GM12878 (cell line): ENCODE measurements at regions of chr4 and their contacts with region 1.

Region 1: GRCh38 chr4:139651282-139652194 is 14.1 kb upstream of the MGST2 start:
- DNase-seq: no peak
- ATAC-seq: peak; percentile 89
- H3K4me3 ChIP-seq: no peak overlapping the region
- H3K27ac ChIP-seq: no peak overlapping the region
- H3K4me1 ChIP-seq: no peaks in the 10 kb centered on the region
- H3K27me3 ChIP-seq: 0 out of 4 replicates have a peak, but pooled peaks cover 0 to 3% of the 10 kb centered on the region in 2 experiments
- CTCF ChIP-seq: peak; percentile 89 to 92 (median 89)
- EP300 ChIP-seq: no peak
- POLR2A ChIP-seq: no peak
- RAD21 ChIP-seq: peak; percentile 74

Region 2: GRCh38 chr4:139416073-139416673 is 235.4 kb before region 1 on chr4:
- CTCF ChIA-PET with region 1: no interaction called
- POLR2A ChIA-PET with region 1: no interaction called
- RAD21 ChIA-PET with region 1: no interaction called
- SMC1A ChIA-PET with region 1: no interaction called
- in situ Hi-C with region 1: no loop called
- intact Hi-C with region 1: loop called (anchors 1 kb)
- DNase-seq: no peak
- ATAC-seq: peak; percentile 68
- H3K4me3 ChIP-seq: no peak overlapping the region
- H3K27ac ChIP-seq: no peak overlapping the region
- H3K4me1 ChIP-seq: no peaks in the 10 kb centered on the region
- H3K27me3 ChIP-seq: no peaks in the 10 kb centered on the region
- CTCF ChIP-seq: peak; percentile 44 to 54 (median 53); a peak in 5 of 6 replicates
- EP300 ChIP-seq: no peak
- POLR2A ChIP-seq: no peak
- RAD21 ChIP-seq: peak; percentile 57

Region 3: DNA sequence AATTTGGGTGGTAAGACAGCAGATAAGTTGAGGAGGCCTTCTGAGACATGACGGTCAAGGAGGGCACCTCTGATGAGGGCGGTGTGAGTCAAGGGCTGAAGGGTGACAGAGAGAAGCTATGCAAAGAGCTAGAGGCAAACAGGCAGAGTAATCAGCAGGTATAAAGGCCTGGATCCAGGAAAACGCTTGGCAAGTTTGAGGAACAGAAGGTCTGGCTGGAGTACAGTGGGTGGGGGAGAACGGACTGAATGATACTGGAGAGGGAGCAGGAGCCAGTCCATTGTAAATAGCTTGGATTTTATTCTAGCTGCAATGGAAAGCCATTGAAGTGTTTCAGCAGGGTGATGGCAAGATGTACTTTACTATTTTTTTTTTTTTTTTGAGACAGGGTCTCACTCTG is 158.4 kb before region 1 on chr4:
- CTCF ChIA-PET with region 1: interaction called, 5 read pairs
- POLR2A ChIA-PET with region 1: no interaction called
- RAD21 ChIA-PET with region 1: no interaction called
- SMC1A ChIA-PET with region 1: no interaction called
- in situ Hi-C with region 1: no loop called
- intact Hi-C with region 1: loop called (anchors 10 kb)
- DNase-seq: no peak
- ATAC-seq: no peak
- H3K4me3 ChIP-seq: no peak overlapping the region
- H3K27ac ChIP-seq: no peak overlapping the region
- H3K4me1 ChIP-seq: no peaks in the 10 kb centered on the region
- H3K27me3 ChIP-seq: no peaks in the 10 kb centered on the region
- CTCF ChIP-seq: no peak
- EP300 ChIP-seq: no peak
- POLR2A ChIP-seq: no peak
- RAD21 ChIP-seq: no peak

Region 4: DNA sequence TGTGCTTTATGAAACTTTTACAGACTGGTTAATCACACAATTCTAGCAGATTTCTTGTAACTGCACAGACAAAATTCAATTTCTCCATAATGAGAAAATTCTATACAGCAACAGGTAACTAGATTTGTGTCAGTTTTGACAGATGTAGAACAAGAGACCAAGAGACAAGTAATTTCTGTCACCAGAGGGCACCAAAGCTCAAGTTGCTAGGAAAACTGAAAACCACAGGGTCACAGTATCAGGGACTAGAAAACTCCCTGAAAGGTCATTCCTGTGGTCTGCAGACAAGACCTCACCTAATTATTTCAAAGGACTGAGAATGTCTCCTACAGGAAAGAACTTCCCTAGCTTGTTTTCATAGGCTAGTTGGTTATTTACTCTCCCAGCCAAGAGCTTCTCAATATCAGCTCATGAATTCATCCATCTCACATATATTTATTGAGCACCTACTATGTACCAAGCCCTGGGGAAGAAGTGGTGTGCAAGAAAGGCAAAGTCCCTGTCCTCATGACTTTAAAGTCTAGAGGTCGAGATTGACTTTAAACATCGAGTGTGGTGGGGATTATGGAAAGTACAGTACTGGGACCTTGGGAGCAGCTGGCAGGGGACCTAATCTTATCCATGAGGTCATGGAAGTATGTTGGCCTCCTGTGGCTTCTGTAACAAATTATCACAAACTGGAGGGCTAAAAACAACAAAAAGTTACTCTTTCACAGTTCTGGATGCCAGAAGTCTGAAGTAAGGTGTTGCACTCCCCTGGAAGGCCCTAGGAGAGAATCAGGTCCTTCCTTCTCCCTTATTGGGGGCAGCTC is 47.8 kb before region 1 on chr4:
- CTCF ChIA-PET with region 1: interaction called, 57 read pairs
- POLR2A ChIA-PET with region 1: no interaction called
- RAD21 ChIA-PET with region 1: interaction called, 3 read pairs
- SMC1A ChIA-PET with region 1: interaction called, 22 read pairs
- in situ Hi-C with region 1: no loop called
- intact Hi-C with region 1: loop called (anchors 1 kb)
- DNase-seq: peak; percentile 8
- ATAC-seq: peak; percentile 72
- H3K4me3 ChIP-seq: no peak overlapping the region
- H3K27ac ChIP-seq: no peak overlapping the region
- H3K4me1 ChIP-seq: no peaks in the 10 kb centered on the region
- H3K27me3 ChIP-seq: peaks cover 0 to 2% of the 10 kb centered on the region in 2 experiments; a peak in 1 of 4 replicates
- CTCF ChIP-seq: peak; percentile 46 to 61 (median 57)
- EP300 ChIP-seq: no peak
- POLR2A ChIP-seq: no peak
- RAD21 ChIP-seq: peak; percentile 75

Region 5: DNA sequence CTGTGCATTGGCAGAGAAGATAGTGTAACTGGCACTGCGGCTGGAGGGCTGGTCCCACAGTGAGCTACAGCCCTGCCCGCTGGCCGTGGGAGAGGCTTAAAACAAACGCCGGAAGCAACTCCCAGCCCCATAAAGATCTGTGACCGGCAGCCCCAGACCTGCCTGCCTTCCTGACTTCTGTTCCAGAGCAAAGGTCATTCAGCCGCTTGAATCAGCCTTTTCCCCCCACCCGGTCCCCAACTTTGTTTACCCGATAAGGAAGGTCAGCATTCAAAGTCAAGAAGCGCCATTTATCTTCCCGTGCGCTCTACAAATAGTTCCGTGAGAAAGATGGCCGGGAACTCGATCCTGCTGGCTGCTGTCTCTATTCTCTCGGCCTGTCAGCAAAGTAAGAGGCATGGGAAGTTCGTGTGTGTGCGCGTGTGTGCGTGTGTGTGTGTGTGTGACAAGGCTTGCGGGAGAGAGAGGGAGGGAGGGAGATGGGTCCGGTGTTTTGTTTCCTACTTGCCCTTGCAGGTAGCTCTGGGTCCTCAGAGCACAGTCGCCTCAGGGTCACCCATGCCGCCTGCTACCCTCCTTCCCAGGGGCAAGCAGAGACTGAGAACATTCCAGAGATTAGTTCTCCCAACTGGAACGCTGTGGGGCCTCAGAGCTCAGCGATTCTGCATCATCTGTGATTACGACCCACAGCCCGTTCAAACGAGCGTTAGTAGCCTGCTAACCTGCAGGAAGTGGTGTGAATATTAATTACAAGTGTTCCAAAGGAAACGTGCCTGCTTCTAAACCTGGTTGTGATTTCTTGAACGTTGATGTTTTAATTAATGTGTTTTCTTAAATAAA is 14.4 kb after region 1 on chr4 and contains the start of gene MGST2:
- CTCF ChIA-PET with region 1: interaction called, 30 read pairs
- POLR2A ChIA-PET with region 1: no interaction called
- RAD21 ChIA-PET with region 1: interaction called, 4 read pairs
- SMC1A ChIA-PET with region 1: interaction called, 3 read pairs
- in situ Hi-C with region 1: no loop called
- intact Hi-C with region 1: no loop called
- DNase-seq: no peak
- ATAC-seq: peak; percentile 94
- H3K4me3 ChIP-seq: peak within 1 kb of the TSS; percentile 69
- H3K27ac ChIP-seq: peak within 1 kb of the TSS; percentile 81
- H3K4me1 ChIP-seq: no peaks in the 10 kb centered on the region; the same call in 1 of the 2 replicates
- H3K27me3 ChIP-seq: no peaks in the 10 kb centered on the region
- CTCF ChIP-seq: no peak
- EP300 ChIP-seq: no peak
- POLR2A ChIP-seq: peak; percentile 71
- RAD21 ChIP-seq: no peak
- polyA plus RNA-seq, gene MGST2: 36.0 to 50.1 TPM

Region 6: GRCh38 chr4:139734875-139735380 is 83.4 kb after region 1 on chr4:
- CTCF ChIA-PET with region 1: no interaction called
- POLR2A ChIA-PET with region 1: no interaction called
- RAD21 ChIA-PET with region 1: no interaction called
- SMC1A ChIA-PET with region 1: no interaction called
- in situ Hi-C with region 1: no loop called
- intact Hi-C with region 1: no loop called
- DNase-seq: no peak
- ATAC-seq: peak; percentile 84
- H3K4me3 ChIP-seq: no peak overlapping the region
- H3K27ac ChIP-seq: no peak overlapping the region
- H3K4me1 ChIP-seq: no peaks in the 10 kb centered on the region
- H3K27me3 ChIP-seq: peaks cover 6 to 24% of the 10 kb centered on the region in 2 experiments
- CTCF ChIP-seq: peak; percentile 17 to 49 (median 49); a peak in 5 of 6 replicates
- EP300 ChIP-seq: no peak
- POLR2A ChIP-seq: no peak
- RAD21 ChIP-seq: peak; percentile 47

Region 7: DNA sequence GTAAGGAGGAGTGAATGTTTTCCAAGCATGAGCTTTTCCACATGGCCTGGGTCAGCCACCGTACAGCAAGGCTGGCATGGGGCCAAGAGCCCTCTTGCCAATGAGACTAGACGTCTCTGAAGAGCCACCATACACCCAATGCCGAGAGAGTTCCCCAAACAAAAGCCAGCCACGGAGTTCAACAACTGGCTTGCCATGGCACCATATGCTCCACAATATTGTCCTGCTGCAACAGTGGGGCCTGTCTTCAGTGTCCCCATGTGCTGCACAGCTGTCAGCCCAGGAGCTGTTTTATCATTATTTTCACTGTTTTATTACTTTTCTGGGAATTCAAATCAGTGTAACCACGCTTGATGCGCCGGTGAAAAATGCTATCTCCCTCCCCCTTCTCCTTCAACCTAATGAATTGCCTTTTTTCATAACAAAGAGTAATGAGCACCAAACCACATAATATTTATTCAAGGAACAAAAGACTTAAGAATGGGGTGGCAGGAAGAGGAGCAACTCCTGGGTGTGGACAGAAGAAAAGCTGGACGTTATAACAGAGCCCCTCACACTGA is 484.1 kb after region 1 on chr4:
- CTCF ChIA-PET with region 1: no interaction called
- POLR2A ChIA-PET with region 1: no interaction called
- RAD21 ChIA-PET with region 1: no interaction called
- SMC1A ChIA-PET with region 1: no interaction called
- in situ Hi-C with region 1: no loop called
- intact Hi-C with region 1: no loop called
- DNase-seq: no peak
- ATAC-seq: no peak
- H3K4me3 ChIP-seq: no peak overlapping the region
- H3K27ac ChIP-seq: no peak overlapping the region
- H3K4me1 ChIP-seq: no peaks in the 10 kb centered on the region
- H3K27me3 ChIP-seq: peaks cover 0 to 4% of the 10 kb centered on the region in 2 experiments; a peak in 1 of 4 replicates
- CTCF ChIP-seq: no peak
- EP300 ChIP-seq: no peak
- POLR2A ChIP-seq: no peak
- RAD21 ChIP-seq: no peak